ENCODE measurements at regions of chr7 and their contacts with region 1.

Region 1: DNA sequence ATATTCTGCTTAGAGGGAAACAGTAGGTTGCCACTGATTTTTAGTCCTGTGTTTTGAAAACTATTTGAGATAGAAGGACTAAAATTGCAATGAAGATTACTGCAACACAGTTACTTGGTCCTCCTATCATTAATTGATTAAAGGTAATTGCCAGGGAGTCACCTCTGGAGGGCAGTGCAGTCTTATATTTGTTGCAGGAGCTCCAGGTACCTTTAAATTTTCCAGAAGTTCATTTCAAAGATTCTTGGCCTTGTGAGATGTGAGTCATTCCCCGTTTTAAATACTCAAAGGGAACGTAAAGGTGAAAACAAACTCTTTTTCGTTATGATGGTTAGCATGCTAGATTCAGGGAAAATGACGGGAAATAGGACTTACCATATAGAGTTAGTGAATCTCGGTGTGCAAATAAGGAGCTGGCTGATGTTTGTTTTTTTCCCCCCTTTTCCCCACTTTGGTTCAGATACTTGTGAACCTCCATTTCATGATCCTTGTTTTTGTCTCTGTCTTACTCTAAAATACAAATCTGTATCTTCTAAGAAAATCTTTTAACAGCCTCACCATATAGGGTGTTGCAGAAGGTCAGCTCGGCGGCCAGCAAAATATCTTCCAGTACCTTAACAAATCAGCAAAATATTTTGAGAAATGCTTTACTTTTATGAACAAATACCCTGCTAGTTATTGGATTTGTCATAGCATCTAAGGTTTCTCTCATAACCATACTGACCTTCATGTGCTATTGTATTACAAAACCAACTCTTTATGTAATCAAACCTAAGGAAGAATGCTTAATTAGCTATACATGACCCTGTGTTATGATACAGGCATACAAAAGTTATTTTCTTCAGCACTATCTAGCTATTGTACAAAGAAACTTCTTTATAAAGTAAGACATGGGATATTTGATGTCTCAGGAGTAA is 143.0 kb upstream of the HDAC9 start:
- DNase-seq: peak; percentile 53
- H3K4me3 ChIP-seq: no peak overlapping the region
- H3K27ac ChIP-seq: no peak overlapping the region
- H3K4me1 ChIP-seq: peaks cover 0 to 17% (median 2%) of the 10 kb centered on the region in 4 donors
- H3K27me3 ChIP-seq: no peaks in the 10 kb centered on the region
- CTCF ChIP-seq: peak; percentile 47 to 60 (median 57)
- EP300 ChIP-seq: no peak
- POLR2A ChIP-seq: no peak

Region 2: DNA sequence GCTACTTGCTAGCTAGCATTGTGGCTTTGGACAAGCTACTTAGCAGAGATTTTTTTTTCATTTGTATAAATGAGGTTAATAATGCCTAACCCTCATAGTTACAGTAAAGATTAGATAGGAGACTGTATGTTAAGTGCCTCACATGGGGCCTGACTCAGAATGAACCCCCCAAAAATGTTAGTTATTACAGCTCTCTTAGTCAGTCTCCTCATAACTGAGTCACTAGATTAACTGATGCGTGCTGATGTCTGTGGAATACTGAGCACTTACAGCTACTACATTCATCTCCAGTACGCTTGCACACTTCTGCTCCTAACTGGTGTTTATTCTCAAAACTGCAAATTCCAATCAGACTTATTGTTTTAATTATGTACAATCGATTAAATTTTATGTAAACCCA is 727.6 kb before region 1 on chr7:
- in situ Hi-C with region 1: no loop called
- intact Hi-C with region 1: no loop called
- DNase-seq: no peak
- H3K4me3 ChIP-seq: no peak overlapping the region
- H3K27ac ChIP-seq: no peak overlapping the region
- H3K4me1 ChIP-seq: no peaks in the 10 kb centered on the region
- H3K27me3 ChIP-seq: no peaks in the 10 kb centered on the region
- CTCF ChIP-seq: no peak
- EP300 ChIP-seq: no peak
- POLR2A ChIP-seq: no peak

Region 3: DNA sequence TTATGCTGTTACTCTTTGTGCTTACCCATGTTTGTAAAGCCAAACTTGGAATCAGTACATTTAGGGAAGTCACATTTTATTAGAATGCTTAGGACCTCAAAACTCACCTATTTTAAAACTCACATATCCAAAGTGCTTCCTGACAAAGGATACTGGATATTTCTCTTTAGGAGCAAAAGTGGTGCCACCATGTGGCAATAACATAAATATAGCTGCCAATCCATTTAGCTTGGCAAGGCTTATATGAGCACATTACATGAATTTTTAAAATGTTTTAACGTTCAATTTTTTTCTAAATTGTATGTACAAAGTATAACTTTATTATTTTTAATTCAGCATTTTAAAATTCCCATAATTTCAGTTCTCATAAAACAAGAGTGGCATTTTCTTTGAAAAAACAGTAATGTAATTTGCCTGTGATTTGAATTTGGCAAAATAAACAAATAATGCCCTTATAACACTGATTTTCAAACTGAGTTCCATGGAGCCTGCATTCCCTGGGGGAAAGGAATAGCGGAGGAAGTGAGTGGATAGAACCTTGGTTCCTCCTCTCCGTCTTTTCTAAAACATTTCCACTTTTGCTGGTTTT is 218.4 kb after region 1 on chr7:
- in situ Hi-C with region 1: loop called in 3 of 4 experiments (anchors 10 to 25 kb)
- intact Hi-C with region 1: loop called (anchors 10 kb)
- DNase-seq: no peak
- H3K4me3 ChIP-seq: no peak overlapping the region
- H3K27ac ChIP-seq: no peak overlapping the region
- H3K4me1 ChIP-seq: peaks cover 0 to 8% (median 0%) of the 10 kb centered on the region in 4 donors
- H3K27me3 ChIP-seq: no peaks in the 10 kb centered on the region
- CTCF ChIP-seq: peak; percentile 35 to 47 (median 36)
- EP300 ChIP-seq: no peak
- POLR2A ChIP-seq: no peak

Region 4: GRCh38 chr7:18590744-18591340 is 238.2 kb after region 1 on chr7:
- in situ Hi-C with region 1: loop called in 1 of 4 experiments (anchors 25 kb)
- intact Hi-C with region 1: no loop called
- DNase-seq: no peak
- H3K4me3 ChIP-seq: no peak overlapping the region
- H3K27ac ChIP-seq: no peak overlapping the region
- H3K4me1 ChIP-seq: peaks cover 0 to 7% (median 3%) of the 10 kb centered on the region in 4 donors
- H3K27me3 ChIP-seq: no peaks in the 10 kb centered on the region
- CTCF ChIP-seq: peak; percentile 31 to 49 (median 42)
- EP300 ChIP-seq: no peak
- POLR2A ChIP-seq: no peak

Region 5: DNA sequence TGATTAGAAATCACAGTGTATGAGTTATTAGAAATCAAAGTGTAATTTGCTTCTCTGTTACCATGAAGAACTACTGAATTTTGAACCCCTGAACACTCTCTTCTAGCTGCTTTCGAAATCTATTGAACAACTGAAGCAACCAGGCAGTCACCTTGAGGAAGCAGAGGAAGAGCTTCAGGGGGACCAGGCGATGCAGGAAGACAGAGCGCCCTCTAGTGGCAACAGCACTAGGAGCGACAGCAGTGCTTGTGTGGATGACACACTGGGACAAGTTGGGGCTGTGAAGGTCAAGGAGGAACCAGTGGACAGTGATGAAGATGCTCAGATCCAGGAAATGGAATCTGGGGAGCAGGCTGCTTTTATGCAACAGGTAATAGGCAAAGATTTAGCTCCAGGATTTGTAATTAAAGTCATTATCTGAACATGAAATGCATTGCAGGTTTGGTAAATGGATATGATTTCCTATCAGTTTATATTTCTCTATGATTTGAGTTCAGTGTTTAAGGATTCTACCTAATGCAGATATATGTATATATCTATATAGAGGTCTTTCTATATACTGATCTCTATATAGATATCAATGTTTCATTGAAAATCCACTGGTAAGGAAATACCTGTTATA is 313.6 kb after region 1 on chr7:
- in situ Hi-C with region 1: loop called in 3 of 4 experiments (anchors 10 to 25 kb)
- intact Hi-C with region 1: no loop called
- DNase-seq: peak; percentile 81
- H3K4me3 ChIP-seq: no peak overlapping the region
- H3K27ac ChIP-seq: no peak overlapping the region
- H3K4me1 ChIP-seq: peaks cover 0 to 6% (median 0%) of the 10 kb centered on the region in 4 donors
- H3K27me3 ChIP-seq: no peaks in the 10 kb centered on the region
- CTCF ChIP-seq: peak; percentile 67 to 95 (median 88)
- EP300 ChIP-seq: no peak
- POLR2A ChIP-seq: no peak

Measured in transverse colon (tissue), 4 donors.